ENCODE measurements at regions of chr2 and their contacts with region 1.

Region 1: DNA sequence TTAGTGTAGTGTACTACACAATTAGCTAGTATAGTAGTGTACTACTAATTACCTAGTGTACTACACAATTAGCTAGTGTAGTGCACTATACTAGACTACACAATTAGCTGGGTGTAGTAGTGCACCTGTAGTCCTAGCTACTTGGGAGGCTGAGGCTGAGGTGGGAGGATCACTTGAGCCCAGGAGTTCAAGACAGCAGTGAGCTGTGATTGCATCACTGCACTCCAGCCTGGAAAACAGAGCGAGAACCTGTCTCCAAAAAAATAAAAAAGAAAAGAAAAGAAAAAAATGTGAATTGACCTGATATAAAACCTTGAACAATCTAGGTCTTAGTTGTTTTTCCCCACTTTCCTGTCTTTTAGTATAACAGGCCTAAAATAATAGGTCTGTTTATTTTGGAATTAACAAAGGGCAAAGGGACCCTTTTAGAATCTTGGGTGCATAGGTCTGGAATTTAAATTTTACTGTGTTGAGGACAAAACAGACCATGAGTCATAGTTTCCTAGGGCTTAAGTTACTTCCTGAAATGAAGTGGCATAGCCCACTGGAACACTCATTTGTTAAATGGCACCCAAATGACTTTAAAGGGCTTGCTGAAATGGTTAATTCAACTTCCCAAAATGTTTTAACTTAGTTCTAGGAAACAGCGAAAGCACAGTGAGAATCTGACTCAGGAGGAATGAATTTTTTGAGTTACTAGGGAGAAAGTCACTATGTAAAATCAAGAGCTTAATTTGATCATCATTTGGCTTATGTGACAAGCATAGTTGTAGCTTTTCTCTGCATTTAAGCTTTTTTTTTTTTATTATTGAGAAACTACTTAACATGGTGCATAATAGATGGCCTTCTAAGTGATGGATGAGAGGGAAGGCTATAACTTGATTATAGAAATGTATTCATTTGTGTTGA is 50.7 kb upstream of the ARL5A start:
- DNase-seq: no peak
- H3K4me3 ChIP-seq: no peak overlapping the region
- H3K27ac ChIP-seq: no peak overlapping the region
- H3K4me1 ChIP-seq: no peaks in the 10 kb centered on the region
- H3K27me3 ChIP-seq: no peaks in the 10 kb centered on the region
- CTCF ChIP-seq: no peak
- EP300 ChIP-seq: no peak
- POLR2A ChIP-seq: no peak

Region 2: DNA sequence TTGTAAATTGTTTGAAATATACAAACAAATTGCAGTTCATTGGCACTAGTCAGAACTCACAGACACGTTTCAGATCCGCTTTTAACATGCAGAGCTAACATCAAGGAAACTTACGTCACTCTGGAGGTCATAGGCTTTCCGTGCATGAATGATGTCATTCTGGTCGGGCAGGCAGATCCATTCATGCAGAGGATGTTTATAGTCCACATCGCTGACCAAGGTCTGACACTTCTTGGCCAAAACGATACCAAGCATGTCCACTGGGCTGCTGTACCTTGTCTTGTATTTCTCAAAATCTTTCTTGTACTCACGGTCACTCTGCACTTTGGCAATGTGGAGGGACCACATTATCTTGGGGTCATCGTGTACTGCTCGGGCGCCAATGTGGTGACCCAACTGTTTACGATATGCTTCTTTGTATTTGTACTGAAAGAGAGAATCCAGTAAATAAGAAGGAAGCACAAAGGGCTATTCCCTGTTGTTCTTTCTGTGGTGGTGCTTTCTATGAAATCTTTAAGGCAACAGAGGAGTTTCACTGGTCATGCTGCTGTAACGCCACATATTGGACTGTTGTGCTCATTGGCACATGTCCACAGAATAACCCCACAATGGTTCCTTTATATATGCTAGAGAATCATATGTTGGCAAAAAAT is 259.4 kb before region 1 on chr2:
- intact Hi-C with region 1: loop called in 1 of 4 experiments (anchors 10 kb)
- DNase-seq: no peak
- H3K4me3 ChIP-seq: no peak overlapping the region
- H3K27ac ChIP-seq: no peak overlapping the region
- H3K4me1 ChIP-seq: no peaks in the 10 kb centered on the region
- H3K27me3 ChIP-seq: no peaks in the 10 kb centered on the region
- CTCF ChIP-seq: no peak
- EP300 ChIP-seq: no peak
- POLR2A ChIP-seq: no peak